Dendritic cell treated with granulocyte-macrophage colony-stimulating factor and Interleukin-4, amounts not matched to agents 40 ng/mL and 50 ng/mL, for 4 days (primary cell): ENCODE measurements at regions of chr1 and their contacts with region 1.

Region 1: GRCh38 chr1:157773493-157774350 is 3.2 kb downstream of the FCRL2 start:
- H3K4me3 Mint-ChIP-seq: no peak overlapping the region
- H3K27ac Mint-ChIP-seq: no peak overlapping the region
- H3K4me1 Mint-ChIP-seq: peaks cover 29% of the 10 kb centered on the region
- H3K27me3 Mint-ChIP-seq: peaks cover 46% of the 10 kb centered on the region

Region 2: GRCh38 chr1:157691285-157691920 is 82.3 kb before region 1 on chr1:
- intact Hi-C with region 1: no loop called
- H3K4me3 Mint-ChIP-seq: no peak overlapping the region
- H3K27ac Mint-ChIP-seq: no peak overlapping the region
- H3K4me1 Mint-ChIP-seq: no peaks in the 10 kb centered on the region
- H3K27me3 Mint-ChIP-seq: peaks cover 30% of the 10 kb centered on the region

Region 3: DNA sequence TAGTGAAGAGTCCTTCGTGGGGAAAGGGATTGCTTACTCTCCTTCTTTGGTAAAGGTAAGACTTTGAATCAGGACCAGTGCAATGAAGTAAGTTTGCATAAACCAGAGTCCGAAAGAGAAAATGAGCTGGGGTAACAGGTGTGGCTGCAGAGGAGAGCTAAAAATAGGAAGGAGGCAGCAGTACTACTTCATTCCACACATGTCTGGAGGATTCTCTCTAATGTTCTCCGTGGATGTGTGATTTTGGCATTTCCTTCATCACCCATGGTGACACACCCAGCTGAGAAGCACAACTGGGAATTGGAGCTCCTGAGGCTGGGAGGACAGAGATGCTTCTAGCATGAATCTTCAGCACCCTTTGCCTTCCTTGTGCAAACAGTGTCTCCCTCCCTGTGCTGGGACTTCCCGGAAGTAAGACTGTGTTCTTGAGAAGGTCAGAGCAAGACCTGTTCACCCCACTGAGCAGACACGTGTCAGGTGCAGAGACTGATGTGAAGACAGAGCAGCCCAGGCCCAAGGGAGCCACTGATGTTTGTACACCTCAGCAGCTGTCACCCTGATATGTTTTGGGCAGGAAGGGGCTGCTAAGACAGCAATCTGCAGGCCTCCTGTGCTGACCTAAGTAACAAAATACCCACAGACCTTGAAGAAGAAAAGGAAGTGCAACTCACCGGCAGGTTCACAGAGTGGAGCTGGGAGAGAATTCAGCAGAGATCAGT is 32.9 kb after region 1 on chr1:
- intact Hi-C with region 1: no loop called
- H3K4me3 Mint-ChIP-seq: no peak overlapping the region
- H3K27ac Mint-ChIP-seq: no peak overlapping the region
- H3K4me1 Mint-ChIP-seq: peaks cover 20% of the 10 kb centered on the region
- H3K27me3 Mint-ChIP-seq: peaks cover 26% of the 10 kb centered on the region

Region 4: DNA sequence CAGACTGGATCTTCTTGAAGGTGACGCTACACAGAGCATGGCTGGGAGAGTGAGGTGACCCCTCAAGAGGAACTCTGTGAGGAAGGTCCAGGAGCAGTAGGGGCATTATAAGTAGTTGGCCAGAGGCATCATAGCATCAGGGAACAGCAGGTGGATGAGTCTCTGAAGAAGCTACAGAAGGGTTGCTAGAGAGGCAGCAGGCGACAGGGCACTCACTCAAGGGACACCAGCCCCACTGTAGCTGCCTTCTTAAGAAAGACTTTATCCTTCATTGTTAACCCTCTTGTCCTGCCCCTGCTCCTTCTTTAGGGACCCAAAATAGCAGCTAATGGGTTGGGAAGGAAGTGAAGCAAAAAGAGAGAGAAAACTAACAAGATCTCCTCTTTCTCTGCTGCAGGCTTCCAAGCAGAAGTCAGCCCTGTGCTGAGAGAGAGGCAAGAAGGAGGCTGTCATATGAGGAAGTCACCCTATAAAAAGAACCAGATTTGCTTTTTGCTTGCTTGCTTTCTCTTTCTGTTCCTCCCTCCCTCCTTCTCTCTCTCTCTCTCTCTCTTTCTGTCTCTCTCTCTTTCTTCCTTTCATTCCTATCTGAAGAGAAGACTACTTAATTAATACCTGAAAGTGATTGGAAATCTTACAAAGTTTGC is 75.6 kb after region 1 on chr1:
- intact Hi-C with region 1: loop called (anchors 10 kb)
- H3K4me3 Mint-ChIP-seq: no peak overlapping the region
- H3K27ac Mint-ChIP-seq: peak overlapping the region; percentile 43
- H3K4me1 Mint-ChIP-seq: peaks cover 29% of the 10 kb centered on the region
- H3K27me3 Mint-ChIP-seq: no peaks in the 10 kb centered on the region

Region 5: GRCh38 chr1:157963713-157964112 is 190.0 kb after region 1 on chr1:
- intact Hi-C with region 1: no loop called
- H3K4me3 Mint-ChIP-seq: no peak overlapping the region
- H3K27ac Mint-ChIP-seq: no peak overlapping the region
- H3K4me1 Mint-ChIP-seq: peaks cover 24% of the 10 kb centered on the region
- H3K27me3 Mint-ChIP-seq: peaks cover 35% of the 10 kb centered on the region